ENCODE measurements at regions of chr19 and their contacts with region 1.

Region 1: DNA sequence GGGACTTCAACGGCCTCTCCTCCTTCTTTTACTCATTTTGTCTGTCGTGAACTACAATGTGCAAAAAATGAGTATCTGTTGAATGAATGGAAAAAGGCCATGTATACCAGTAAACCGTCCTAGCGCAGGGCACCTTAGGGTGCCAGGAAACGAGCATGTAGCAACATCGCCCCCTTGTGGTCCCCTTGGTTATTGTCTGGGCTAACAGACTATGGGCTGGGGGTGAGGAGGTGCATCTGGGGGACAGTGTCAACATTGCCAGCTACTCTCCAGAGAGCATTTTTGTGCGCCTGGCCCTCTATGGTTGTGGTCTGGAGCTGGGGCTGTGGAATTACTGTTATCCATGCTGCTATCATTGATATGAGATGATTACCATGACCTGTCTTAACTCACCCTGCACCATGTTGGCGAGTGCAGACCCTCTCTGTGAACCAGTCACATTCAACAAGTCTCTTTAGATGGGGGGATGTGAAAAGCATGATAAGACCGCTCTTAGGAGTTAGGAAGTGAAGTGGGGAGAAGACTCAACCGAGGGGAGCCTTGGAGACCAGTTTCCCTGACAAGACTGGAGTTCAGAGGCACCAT is 22.8 kb upstream of the SIGLEC11 start:
- DNase-seq: peak; percentile 61
- H3K4me3 Mint-ChIP-seq: no peak overlapping the region
- H3K27ac Mint-ChIP-seq: no peak overlapping the region
- H3K4me1 Mint-ChIP-seq: peaks cover 13% of the 10 kb centered on the region
- H3K27me3 Mint-ChIP-seq: no peaks in the 10 kb centered on the region

Region 2: DNA sequence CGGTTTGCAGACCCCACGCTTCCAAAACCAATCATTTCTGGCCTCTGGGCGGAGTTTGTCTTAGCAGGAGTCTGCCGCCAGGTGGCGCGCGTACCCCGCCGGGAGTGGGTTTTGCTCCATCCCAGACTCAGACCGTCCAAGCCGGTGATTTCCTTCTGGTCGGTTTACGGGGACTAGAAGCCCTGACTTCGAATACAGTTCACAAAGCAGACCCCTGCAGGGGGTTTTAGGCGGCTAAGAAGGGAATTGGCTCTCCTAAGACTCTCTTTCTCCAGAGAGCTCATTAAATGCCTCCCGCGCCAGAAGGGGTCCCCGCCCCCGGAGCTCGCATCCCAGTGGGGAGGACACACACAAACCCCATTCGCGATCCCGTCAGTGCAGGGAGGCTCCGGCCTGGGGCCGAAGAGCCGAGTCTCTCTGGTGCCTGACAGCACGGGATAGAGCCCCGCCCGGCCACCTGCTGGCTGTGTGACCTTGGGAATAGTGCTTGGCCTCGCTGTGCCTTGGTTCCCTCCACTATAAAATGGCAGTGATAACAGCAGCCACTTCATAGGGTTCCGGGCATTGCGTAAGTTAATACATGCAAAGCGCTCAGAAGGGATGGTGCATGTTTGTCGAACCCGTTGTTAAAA is 45.9 kb before region 1 on chr19:
- intact Hi-C with region 1: loop called (anchors 1 kb)
- DNase-seq: peak; percentile 68
- H3K4me3 Mint-ChIP-seq: no peak overlapping the region
- H3K27ac Mint-ChIP-seq: no peak overlapping the region
- H3K4me1 Mint-ChIP-seq: peaks cover 14% of the 10 kb centered on the region
- H3K27me3 Mint-ChIP-seq: peaks cover 15% of the 10 kb centered on the region

Region 3: DNA sequence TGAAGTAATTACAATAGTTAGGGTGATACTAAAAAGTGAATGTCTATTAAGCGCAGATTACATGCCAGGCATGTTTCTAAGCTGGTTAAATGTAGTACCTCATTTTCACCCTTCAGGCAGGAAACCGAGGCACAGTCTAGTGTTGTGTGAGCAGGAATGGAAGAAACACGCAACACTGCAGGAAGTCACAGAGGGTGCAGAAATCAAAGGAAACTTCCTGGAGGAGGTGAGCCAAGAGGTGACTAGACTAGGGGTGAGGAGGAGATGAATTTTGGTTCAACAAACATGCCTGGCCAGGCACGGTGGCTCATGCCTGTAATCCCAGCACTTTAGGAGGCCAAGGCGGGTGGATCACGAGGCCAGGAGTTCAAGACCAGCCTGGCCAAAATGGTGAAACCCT is 83.8 kb after region 1 on chr19:
- intact Hi-C with region 1: no loop called
- DNase-seq: no peak
- H3K4me3 Mint-ChIP-seq: no peak overlapping the region
- H3K27ac Mint-ChIP-seq: no peak overlapping the region
- H3K4me1 Mint-ChIP-seq: no peaks in the 10 kb centered on the region
- H3K27me3 Mint-ChIP-seq: no peaks in the 10 kb centered on the region

Region 4: GRCh38 chr19:50308991-50309390 is 325.3 kb after region 1 on chr19:
- intact Hi-C with region 1: no loop called
- DNase-seq: no peak
- H3K4me3 Mint-ChIP-seq: no peak overlapping the region
- H3K27ac Mint-ChIP-seq: no peak overlapping the region
- H3K4me1 Mint-ChIP-seq: no peaks in the 10 kb centered on the region
- H3K27me3 Mint-ChIP-seq: peaks cover 45% of the 10 kb centered on the region

Region 5: GRCh38 chr19:50500060-50500752 is 516.5 kb after region 1 on chr19:
- intact Hi-C with region 1: no loop called
- DNase-seq: no peak
- H3K4me3 Mint-ChIP-seq: no peak overlapping the region
- H3K27ac Mint-ChIP-seq: no peak overlapping the region
- H3K4me1 Mint-ChIP-seq: no peaks in the 10 kb centered on the region
- H3K27me3 Mint-ChIP-seq: no peaks in the 10 kb centered on the region